ENCODE measurements at regions of chr11 and their contacts with region 1.

Region 1: DNA sequence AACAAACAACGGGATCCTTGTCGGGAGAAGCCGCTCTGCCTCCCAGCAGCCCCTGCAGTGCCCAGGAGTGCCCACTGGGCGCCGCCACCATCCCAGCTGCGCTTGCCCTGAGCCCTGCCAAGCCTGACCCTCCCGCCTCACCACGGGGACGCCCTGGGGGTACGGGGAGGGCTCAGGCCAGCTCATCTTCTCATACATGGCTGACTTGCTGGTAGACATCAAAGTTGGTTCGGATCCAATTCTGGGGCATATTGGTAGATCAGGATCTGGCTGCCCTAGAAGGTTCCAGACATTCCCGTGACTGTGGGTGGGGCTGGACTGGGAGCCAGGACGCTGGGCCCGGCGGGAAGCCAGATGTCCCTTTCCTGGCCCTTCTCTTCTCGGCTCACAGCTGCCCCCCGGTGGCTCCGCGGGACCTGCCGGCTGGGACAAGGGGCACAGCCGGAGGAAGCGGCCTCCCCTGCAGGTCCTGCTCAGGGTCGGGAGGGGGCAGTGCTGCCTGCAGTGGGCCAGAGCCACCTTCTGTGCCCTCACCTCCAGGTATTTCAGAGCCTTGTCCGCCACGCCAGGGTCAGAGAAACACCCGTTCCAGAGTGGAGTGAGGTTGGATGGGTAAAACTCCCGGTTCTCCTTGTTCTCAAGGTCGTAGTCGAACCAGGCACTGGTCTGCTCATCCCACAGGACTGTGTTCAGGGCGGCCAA is 10.6 kb upstream of the TREH start:
- DNase-seq: peak; percentile 93
- H3K4me3 ChIP-seq: peak overlapping the region in 1 of 3 experiments; percentile 19
- H3K27ac ChIP-seq: peak overlapping the region; percentile 16
- H3K4me1 ChIP-seq: peaks cover 37% of the 10 kb centered on the region
- H3K27me3 ChIP-seq: no peaks in the 10 kb centered on the region
- CTCF ChIP-seq: peak; percentile 82 to 90

Region 2: GRCh38 chr11:118240999-118241768 is 448.8 kb before region 1 on chr11:
- CTCF ChIA-PET with region 1: no interaction called
- dilution Hi-C with region 1: no loop called
- in situ Hi-C with region 1: no loop called
- intact Hi-C with region 1: no loop called
- DNase-seq: peak; percentile 88
- H3K4me3 ChIP-seq: no peak overlapping the region
- H3K27ac ChIP-seq: peak overlapping the region; percentile 72
- H3K4me1 ChIP-seq: peaks cover 18% of the 10 kb centered on the region
- H3K27me3 ChIP-seq: no peaks in the 10 kb centered on the region
- CTCF ChIP-seq: no peak

Region 3: DNA sequence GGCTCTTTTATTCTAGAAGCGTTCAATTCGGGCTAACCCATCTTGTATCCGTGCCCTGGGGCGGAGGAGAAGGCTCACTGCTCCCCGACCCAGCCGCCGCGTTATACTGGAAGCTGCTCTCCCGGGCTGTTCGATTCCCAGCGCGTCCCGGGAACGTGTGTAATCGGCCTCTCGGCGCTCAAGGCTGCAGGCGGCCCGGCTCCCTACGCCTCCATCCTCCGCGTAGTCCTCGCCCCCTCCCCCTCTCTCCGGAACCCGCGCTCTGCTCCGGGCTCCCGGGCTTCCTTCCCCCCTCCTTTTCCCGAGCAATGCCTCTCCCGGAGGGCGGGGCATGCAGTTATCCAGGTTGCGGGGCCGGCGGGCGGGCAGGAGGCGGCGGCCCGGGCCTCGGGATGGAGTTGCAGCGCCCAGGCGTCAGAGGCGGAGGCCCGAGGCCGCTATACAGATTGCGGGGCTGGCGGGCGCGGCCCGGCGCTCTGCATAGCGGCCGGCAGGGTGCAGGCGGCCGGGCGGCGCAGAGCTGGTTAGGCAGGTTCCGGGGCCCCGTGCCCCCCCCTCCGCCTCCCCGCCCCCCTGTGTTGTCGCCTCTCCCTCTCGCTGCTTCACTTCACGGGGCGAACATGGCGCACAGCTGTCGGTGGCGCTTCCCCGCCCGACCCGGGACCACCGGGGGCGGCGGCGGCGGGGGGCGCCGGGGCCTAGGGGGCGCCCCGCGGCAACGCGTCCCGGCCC is 253.9 kb before region 1 on chr11 and contains the start of gene KMT2A:
- CTCF ChIA-PET with region 1: no interaction called
- dilution Hi-C with region 1: no loop called
- in situ Hi-C with region 1: no loop called
- intact Hi-C with region 1: no loop called
- DNase-seq: peak; percentile 99
- H3K4me3 ChIP-seq: peak within 1 kb of the TSS; percentile 84 to 95 (median 88)
- H3K27ac ChIP-seq: peak within 1 kb of the TSS; percentile 42
- H3K4me1 ChIP-seq: peaks cover 25% of the 10 kb centered on the region
- H3K27me3 ChIP-seq: no peaks in the 10 kb centered on the region
- CTCF ChIP-seq: no peak
- total RNA-seq, gene KMT2A: 35.7 to 55.2 TPM

Region 4: DNA sequence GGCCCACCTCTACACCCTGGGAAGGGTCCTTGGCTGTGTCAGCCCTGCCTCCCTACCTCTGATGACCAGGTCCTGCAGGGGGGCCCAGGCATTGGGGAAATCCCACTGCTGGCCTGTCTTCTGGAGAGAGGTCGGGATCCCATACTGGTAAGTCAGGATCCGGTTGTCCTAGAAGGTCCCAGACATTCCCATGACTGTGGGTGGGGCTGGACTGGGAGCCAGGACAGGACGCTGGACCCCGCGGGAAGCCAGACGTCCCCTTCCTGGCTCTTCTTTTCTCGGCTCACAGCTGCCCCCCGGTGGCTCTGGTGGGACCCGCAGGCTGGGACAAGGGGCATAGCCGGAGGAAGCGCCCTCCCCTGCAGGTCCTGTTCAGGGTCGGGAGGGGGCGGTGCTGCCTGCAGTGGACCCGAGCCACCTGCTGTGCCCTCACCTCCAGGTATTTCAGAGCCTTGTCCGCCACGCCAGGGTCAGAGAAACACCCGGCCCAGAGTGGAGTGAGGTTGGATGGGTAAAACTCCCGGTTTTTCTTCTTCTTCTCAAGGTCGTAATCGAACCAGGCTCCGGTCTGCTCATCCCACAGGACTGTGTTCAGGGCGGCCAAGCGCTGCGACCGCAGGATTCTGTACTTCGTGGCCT is 30.6 kb before region 1 on chr11:
- CTCF ChIA-PET with region 1: interaction called, 3 read pairs
- dilution Hi-C with region 1: no loop called
- in situ Hi-C with region 1: no loop called
- intact Hi-C with region 1: loop called (anchors 2 kb)
- DNase-seq: peak; percentile 58
- H3K4me3 ChIP-seq: no peak overlapping the region
- H3K27ac ChIP-seq: no peak overlapping the region
- H3K4me1 ChIP-seq: peaks cover 23% of the 10 kb centered on the region
- H3K27me3 ChIP-seq: no peaks in the 10 kb centered on the region
- CTCF ChIP-seq: peak; percentile 81 to 85

Region 5: GRCh38 chr11:118746988-118747585 is 57.1 kb after region 1 on chr11:
- CTCF ChIA-PET with region 1: no interaction called
- dilution Hi-C with region 1: no loop called
- in situ Hi-C with region 1: no loop called
- intact Hi-C with region 1: loop called (anchors 2 kb)
- DNase-seq: no peak
- H3K4me3 ChIP-seq: no peak overlapping the region
- H3K27ac ChIP-seq: no peak overlapping the region
- H3K4me1 ChIP-seq: no peaks in the 10 kb centered on the region
- H3K27me3 ChIP-seq: no peaks in the 10 kb centered on the region
- CTCF ChIP-seq: no peak

Region 6: GRCh38 chr11:118757876-118758399 is 67.9 kb after region 1 on chr11:
- CTCF ChIA-PET with region 1: no interaction called
- dilution Hi-C with region 1: no loop called
- in situ Hi-C with region 1: no loop called
- intact Hi-C with region 1: no loop called
- DNase-seq: no peak
- H3K4me3 ChIP-seq: no peak overlapping the region
- H3K27ac ChIP-seq: no peak overlapping the region
- H3K4me1 ChIP-seq: no peaks in the 10 kb centered on the region
- H3K27me3 ChIP-seq: no peaks in the 10 kb centered on the region
- CTCF ChIP-seq: no peak

Region 7: DNA sequence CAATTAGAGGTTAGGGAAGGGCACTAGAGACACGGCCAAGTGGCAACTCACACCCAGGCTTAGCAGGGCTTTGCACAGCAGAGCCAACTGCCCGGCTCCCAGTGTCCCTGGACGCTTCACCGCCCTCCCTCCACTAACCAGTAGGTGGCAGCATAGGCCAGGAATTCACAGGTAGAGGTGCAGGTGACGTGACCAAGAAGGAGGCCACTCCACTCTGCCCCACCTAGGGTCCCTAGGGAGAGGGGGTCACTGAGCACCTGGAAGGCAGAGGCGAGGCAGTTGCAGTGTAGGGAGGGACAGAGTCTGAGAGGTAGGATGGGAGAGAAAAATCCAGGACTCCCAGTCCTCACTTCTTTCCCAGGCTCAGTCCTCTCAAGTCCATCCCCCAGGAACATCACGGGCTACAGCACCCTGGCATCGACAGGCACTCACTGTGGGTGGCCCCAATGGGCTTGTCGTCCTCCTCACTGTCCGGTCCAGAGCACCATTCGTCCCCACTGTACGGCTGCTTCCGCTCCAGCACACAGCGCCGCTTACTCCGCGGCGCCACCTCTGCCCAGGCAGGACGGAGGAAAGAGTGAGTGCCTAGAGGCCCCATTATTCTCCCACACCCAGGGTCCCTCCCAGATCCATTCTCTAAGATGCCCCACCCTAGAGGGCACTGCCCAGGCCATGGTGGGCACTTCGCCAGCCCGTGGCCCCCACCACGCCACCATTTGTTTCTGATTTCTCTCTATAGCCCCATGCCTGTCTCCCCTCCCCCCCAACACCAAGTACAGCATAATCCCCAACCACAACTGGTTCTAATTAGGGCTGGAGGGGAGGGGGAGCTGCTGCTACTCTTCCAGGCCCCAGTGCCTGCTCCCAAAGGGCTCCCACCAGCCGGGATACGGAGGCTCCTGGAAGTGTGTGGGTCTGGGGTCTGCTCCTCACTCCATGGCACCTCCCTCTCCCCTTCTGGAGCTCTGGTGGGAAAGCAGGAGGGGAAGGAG is 217.3 kb after region 1 on chr11:
- CTCF ChIA-PET with region 1: no interaction called
- dilution Hi-C with region 1: no loop called
- in situ Hi-C with region 1: no loop called
- intact Hi-C with region 1: loop called (anchors 1 kb)
- DNase-seq: peak; percentile 69
- H3K4me3 ChIP-seq: no peak overlapping the region
- H3K27ac ChIP-seq: no peak overlapping the region
- H3K4me1 ChIP-seq: peaks cover 43% of the 10 kb centered on the region
- H3K27me3 ChIP-seq: no peaks in the 10 kb centered on the region
- CTCF ChIP-seq: peak; percentile 88 to 92

Region 8: GRCh38 chr11:118956094-118956846 is 266.3 kb after region 1 on chr11 and contains the start of gene UPK2:
- CTCF ChIA-PET with region 1: no interaction called
- dilution Hi-C with region 1: no loop called
- in situ Hi-C with region 1: loop called in 1 of 2 experiments (anchors 10 kb)
- intact Hi-C with region 1: loop called (anchors 1 kb)
- DNase-seq: peak; percentile 72
- H3K4me3 ChIP-seq: no peak within 1 kb of the TSS
- H3K27ac ChIP-seq: no peak within 1 kb of the TSS
- H3K4me1 ChIP-seq: peaks cover 2% of the 10 kb centered on the region
- H3K27me3 ChIP-seq: no peaks in the 10 kb centered on the region
- CTCF ChIP-seq: peak; percentile 95 to 98
- total RNA-seq, gene UPK2: 0.45 TPM in 1 of 2 donors, not detected in the other

Region 9: GRCh38 chr11:119334174-119334930 is 644.4 kb after region 1 on chr11 and contains the start of gene RNF26:
- CTCF ChIA-PET with region 1: no interaction called
- dilution Hi-C with region 1: no loop called
- in situ Hi-C with region 1: no loop called
- intact Hi-C with region 1: loop called (anchors 10 kb)
- DNase-seq: peak; percentile 95
- H3K4me3 ChIP-seq: peak within 1 kb of the TSS; percentile 63 to 97 (median 93)
- H3K27ac ChIP-seq: peak within 1 kb of the TSS; percentile 88
- H3K4me1 ChIP-seq: peaks cover 22% of the 10 kb centered on the region
- H3K27me3 ChIP-seq: no peaks in the 10 kb centered on the region
- CTCF ChIP-seq: no peak
- total RNA-seq, gene RNF26: 3.7 to 34.4 TPM